Right ventricle myocardium superior (tissue), 1 donor: ENCODE measurements at regions of chr9 and their contacts with region 1.

Region 1: DNA sequence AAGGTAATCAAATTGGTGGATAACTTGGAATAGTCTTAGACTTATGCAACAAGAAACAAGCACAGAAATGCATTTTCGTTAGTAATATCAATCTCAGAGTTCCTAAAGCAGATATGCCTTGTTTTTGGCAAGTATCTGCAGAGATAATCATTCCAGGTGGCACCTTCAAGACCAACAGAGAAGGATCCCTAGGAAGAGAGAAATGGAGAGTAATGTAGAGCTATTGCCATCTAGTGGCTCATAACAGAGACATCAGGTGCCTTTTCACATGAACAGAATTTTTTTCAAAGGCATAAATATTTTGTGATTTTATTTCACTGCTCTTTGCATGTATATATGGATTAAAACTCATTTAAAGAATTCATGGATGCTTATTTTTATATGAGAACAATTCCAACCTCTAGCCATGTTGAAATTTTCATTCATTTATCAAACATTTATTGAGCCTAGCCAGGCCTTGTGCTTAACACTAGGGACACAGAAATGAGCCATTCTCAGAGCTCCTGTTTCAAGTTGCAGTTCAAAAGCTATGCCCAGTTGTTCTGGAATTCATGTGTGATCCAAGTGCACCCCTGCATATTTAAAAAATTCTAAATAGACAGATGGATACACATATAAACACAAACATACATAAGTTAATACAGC is 117.5 kb upstream of the OR13F1 start:
- DNase-seq: no peak
- ATAC-seq: no peak

Region 2: DNA sequence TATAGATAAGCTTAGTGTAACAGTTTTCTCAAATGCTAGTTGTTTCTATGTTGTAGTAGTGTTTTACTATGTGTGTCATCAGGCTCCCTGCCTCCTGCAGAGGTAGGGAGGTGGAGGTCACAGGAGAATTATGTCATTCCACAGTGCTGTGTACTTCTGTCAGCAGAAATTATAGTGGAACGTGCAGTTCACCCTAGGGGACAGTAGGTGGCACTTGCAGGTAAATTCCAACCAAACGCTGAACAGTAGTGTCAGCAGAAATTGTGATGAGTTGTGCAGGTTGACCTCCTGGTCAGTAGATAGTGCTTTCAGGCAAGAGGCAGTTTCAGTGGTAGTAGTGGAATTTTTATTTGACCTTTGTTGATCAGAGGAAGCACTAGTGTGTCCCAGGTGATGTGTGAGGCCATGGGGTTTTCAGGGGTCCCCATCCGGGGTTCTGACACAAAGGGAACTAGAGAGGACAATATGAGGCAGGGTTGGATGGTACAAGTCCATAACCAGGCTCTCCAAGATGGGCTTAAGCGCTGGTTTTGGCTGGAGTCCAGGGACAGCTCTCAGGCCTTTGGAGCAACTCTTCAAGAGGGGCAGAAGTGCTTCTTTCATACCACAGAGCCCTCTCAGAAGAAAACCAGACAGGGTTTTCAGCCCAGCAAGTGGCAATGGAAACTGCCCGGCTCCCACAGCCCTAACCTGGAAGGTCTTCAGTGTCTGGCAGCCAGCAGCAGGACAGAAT is 988.5 kb before region 1 on chr9:
- intact Hi-C with region 1: loop called (anchors 5 kb)
- DNase-seq: no peak
- ATAC-seq: peak; percentile 41

Region 3: DNA sequence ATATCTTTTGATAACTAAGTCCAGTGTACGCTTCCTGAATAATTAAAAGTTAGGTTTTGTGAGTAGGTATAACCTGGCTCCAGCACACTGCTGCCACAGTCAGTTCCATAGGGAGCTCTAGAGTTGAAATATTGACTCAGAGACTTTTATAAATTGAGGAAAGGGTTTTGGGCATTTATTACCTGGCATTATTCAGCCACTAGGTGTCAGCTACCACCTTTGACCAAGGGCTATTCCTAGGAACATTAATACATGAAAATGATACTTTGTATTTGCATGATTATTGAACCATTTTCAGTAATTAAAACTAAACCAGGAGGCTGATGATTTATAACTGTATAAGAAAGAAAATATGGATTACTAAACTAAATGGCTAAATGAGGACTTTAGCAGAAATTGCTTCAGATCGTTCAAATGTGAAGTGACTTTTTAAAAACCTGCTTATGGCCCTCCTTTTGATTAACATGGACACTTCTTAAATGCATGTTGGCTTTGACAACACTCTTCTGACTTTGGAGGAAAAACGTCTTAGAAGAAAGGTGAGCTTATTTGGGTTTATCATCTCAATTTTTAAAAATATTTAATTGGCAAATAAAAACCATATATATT is 209.4 kb before region 1 on chr9:
- intact Hi-C with region 1: loop called (anchors 10 kb)
- DNase-seq: no peak
- ATAC-seq: no peak

Region 4: GRCh38 chr9:104575456-104575855 is 188.9 kb after region 1 on chr9:
- intact Hi-C with region 1: no loop called
- DNase-seq: no peak
- ATAC-seq: no peak

Region 5: GRCh38 chr9:105114964-105115728 is 728.6 kb after region 1 on chr9:
- intact Hi-C with region 1: no loop called
- DNase-seq: peak; percentile 53
- ATAC-seq: peak; percentile 79